Body of pancreas (tissue), 4 donors: ENCODE measurements at regions of chr10 and their contacts with region 1.

Region 1: GRCh38 chr10:99845837-99846382 is 63.5 kb downstream of the ABCC2 start:
- DNase-seq: peak; percentile 78 to 86 (median 84)
- ATAC-seq: peak; percentile 93
- H3K4me3 ChIP-seq: no peak overlapping the region
- H3K27ac ChIP-seq: no peak overlapping the region
- H3K4me1 ChIP-seq: peaks cover 6% of the 10 kb centered on the region
- H3K27me3 ChIP-seq: no peaks in the 10 kb centered on the region
- CTCF ChIP-seq: peak; percentile 69 to 97 (median 95)
- POLR2A ChIP-seq: no peak

Region 2: DNA sequence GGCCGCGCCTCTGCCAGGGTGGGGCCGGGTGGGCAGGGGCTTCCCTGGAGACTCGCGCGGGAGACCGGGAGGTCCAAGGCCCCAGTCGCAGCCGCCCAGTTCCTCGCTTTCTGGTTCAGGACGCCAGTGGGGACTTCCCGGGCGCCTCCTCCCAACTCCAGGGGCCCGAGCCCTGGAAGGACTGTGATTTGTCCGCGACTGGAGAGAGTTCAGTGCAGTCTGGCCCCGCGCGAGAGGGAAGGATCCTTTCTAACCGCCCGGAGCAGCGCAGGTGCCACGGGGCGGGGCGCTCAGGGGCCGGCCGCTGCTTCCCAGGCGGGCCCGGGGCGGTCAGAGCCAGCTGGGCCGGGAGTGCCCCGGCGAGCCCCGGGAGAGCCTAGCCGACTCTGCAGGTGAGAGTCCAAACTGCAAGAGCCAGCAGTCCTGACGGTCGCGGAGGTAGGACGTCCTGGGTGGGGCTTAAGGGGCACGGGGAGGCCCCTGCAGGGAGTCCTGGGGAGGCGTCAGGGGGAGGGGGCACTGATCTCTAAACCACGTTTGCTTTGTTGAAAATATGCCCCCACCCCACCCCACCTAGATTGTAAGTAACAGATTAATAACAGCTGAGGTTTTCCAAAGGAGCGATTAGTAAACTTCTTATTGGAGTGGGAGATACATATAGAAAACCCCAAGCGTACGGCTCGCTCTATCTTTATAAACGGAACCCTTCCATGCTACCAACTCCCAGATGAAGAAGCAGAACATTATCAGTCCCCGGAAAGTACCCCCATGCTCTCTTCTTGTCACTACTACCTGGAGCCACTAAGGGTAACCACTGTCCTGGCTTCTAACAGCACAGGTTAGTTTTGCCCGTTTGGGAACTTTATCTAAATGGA is 305.0 kb before region 1 on chr10:
- intact Hi-C with region 1: no loop called
- DNase-seq: peak; percentile 49 to 75 (median 62)
- ATAC-seq: peak; percentile 78
- H3K4me3 ChIP-seq: peak overlapping the region in 1 of 2 donors; percentile 4
- H3K27ac ChIP-seq: no peak overlapping the region
- H3K4me1 ChIP-seq: peaks cover 23% of the 10 kb centered on the region
- H3K27me3 ChIP-seq: peaks cover 0 to 21% of the 10 kb centered on the region in 2 donors
- CTCF ChIP-seq: peak in 3 of 7 experiments; percentile 16 to 27 (median 24)
- POLR2A ChIP-seq: no peak

Region 3: GRCh38 chr10:100046021-100046486 is 200.1 kb after region 1 on chr10:
- intact Hi-C with region 1: loop called (anchors 2 kb)
- DNase-seq: peak; percentile 85 to 90 (median 86)
- ATAC-seq: peak; percentile 79
- H3K4me3 ChIP-seq: no peak overlapping the region
- H3K27ac ChIP-seq: no peak overlapping the region
- H3K4me1 ChIP-seq: no peaks in the 10 kb centered on the region
- H3K27me3 ChIP-seq: no peaks in the 10 kb centered on the region
- CTCF ChIP-seq: peak; percentile 85 to 96 (median 91)
- POLR2A ChIP-seq: no peak

Region 4: DNA sequence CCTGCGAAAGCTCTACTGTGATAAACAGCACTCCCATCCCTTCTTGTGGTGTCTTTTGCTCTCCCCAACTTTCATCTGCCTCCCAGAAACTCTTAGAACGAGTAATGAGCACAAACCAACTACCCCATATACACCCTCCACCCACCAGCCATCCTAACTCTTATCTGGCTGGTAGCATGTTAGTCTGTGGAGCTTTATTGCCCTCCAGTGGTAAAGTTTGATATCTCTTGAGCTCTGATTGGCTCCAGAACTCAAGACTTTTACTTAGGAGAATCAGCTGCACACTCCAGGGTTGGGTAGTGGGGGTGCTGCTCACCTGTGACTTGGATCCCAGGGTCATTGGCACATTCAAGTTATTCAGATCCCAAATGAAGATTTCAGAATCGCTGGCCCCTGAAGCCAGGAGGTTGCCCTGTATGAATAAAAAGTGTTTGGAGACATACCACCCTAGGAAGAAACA is 662.8 kb after region 1 on chr10:
- intact Hi-C with region 1: no loop called
- DNase-seq: peak in 1 of 4 donors; percentile 26
- ATAC-seq: peak; percentile 40
- H3K4me3 ChIP-seq: no peak overlapping the region
- H3K27ac ChIP-seq: no peak overlapping the region
- H3K4me1 ChIP-seq: peaks cover 6% of the 10 kb centered on the region
- H3K27me3 ChIP-seq: no peaks in the 10 kb centered on the region
- CTCF ChIP-seq: peak in 6 of 7 experiments; percentile 16 to 58 (median 44)
- POLR2A ChIP-seq: no peak